ENCODE measurements at regions of chr16 and their contacts with region 1.

Region 1: DNA sequence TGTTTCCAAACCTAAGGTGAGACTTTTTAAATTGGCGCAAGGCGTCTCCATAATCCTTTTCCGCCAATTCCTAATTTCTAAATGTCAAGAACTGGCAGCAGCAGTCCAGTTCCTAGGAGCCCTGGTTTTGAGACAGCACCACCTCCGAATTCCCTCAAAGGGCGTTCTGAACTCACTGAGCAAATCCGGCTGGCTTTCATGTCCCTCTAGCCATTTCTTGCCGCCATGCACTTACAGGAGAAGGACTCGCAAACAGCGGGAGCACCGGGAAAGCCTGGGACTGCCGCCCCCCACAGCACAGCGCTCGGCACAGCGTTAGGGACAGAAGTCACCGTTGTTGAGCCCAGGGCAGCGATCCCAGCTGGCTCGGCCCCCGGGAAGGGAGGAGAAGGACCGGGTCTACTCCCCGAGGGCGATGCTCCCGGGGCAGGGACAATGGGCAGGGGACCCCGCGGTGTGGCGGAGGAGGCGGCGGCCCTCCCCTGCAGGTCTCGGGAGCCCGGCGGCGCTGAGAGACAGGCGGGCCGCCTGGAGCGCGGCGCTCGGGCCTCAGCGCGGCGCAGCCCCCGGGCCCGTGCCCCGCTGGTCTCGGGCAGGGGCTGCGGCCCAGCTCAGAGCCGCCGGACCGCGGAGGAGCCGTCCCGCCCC is 545 bp downstream of the ARHGAP17 start:
- DNase-seq: peak; percentile 72
- ATAC-seq: peak; percentile 27

Region 2: GRCh38 chr16:24541233-24541933 is 473.2 kb before region 1 on chr16:
- intact Hi-C with region 1: no loop called
- DNase-seq: no peak
- ATAC-seq: no peak

Region 3: DNA sequence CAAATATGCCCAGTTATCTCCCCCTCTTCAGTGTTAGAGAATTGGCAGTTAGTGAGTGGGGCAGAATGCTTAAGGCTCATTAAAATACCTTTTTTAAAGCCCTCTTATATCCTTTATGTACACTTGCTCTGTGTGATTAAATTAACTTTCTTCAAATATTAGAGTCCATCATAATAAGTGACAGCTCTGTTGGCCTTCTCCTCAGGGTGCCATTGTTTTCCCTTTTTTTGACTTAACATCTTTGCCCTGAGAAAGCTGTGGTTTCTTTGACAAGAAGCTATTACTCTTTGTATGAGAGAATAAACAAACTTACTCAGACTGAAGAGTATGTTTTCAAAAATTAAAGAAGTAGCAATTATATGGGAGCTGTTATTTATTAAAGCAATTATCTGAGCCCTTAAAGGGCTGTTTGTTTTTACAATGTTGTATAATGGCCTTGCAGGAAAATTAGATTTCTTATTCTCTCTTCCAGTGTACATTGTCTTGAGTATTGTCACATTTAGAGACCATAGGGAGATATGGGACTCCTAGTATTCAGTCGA is 461.8 kb before region 1 on chr16:
- intact Hi-C with region 1: no loop called
- DNase-seq: no peak
- ATAC-seq: no peak

Region 4: DNA sequence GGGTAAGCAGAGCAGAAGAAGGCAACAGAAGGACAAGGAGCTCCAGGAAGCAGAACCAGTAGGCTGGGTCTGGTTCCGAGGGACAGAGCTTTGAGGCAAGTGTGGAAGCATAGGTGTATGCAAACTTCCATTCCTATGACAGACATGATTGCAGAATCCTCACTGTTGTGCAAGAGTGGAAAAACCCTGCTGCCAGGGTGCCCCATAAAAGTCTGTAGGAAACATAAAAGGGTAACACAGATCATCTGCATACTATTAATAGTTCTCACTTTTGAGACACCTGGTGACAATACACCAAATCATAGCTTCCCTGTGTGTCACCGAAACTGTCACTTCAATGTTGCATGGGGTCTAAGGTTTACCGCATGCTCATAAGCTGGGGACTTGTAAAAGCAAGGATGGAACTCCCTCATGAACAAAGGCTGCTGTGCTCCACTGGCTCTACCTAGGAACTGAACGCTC is 39.2 kb before region 1 on chr16:
- intact Hi-C with region 1: loop called (anchors 5 kb)
- DNase-seq: no peak
- ATAC-seq: no peak

Region 5: GRCh38 chr16:25311049-25311448 is 296.4 kb after region 1 on chr16:
- intact Hi-C with region 1: no loop called
- DNase-seq: no peak
- ATAC-seq: no peak